ENCODE measurements at regions of chr10 and their contacts with region 1.

Region 1: GRCh38 chr10:9294865-9295264 is 1240.4 kb downstream of the GATA3 start:
- DNase-seq: no peak
- ATAC-seq: no peak
- H3K4me3 ChIP-seq: no peak overlapping the region
- H3K27ac ChIP-seq: no peak overlapping the region
- H3K4me1 ChIP-seq: no peaks in the 10 kb centered on the region
- H3K27me3 ChIP-seq: no peaks in the 10 kb centered on the region
- CTCF ChIP-seq: no peak
- EP300 ChIP-seq: no peak
- POLR2A ChIP-seq: no peak
- RAD21 ChIP-seq: no peak

Region 2: GRCh38 chr10:8035006-8035640 is 1259.7 kb before region 1 on chr10:
- CTCF ChIA-PET with region 1: no interaction called
- POLR2A ChIA-PET with region 1: no interaction called
- in situ Hi-C with region 1: no loop called
- intact Hi-C with region 1: loop called (anchors 5 kb)
- DNase-seq: no peak
- ATAC-seq: no peak
- H3K4me3 ChIP-seq: no peak overlapping the region
- H3K27ac ChIP-seq: no peak overlapping the region
- H3K4me1 ChIP-seq: peaks cover 0 to 15% of the 10 kb centered on the region in 2 experiments; a peak in 1 of 5 replicates
- H3K27me3 ChIP-seq: peaks cover 31 to 55% of the 10 kb centered on the region in 2 experiments
- CTCF ChIP-seq: no peak
- EP300 ChIP-seq: no peak
- POLR2A ChIP-seq: no peak
- RAD21 ChIP-seq: no peak

Region 3: DNA sequence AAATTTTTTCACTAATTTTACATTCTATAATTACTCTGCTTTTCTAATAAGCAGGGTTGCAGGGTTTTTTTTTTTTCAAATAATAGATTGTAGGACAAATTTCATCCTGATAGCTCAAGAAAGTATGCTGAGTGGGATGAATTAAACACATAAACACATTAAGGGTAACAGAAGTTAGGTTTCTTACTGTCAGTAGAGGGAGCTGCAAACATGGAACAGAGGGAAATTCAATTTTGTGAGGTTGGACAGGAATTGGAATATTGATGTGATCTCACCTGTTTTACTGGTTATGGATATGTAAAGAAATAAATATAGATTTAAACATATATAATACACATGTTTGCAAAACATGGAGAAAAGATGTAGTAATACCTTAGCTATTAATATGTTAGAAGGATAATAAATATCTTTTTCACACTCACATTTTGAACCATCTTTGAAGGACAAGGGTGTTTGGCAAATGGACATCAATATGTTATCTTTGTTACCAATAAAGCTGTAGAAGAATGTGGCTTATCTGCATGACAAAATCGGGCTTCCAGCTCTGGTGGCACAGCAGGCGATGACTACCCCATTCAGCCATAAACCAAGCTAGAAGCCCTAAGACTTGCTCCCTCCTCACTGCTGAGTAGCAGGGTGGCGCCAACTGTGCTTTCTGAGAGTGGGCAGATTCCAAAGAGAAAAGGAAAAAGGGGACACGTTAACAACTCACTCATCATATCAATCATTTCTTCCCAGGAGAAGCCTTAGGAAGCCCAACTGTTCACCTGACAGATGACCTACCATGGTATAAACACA is 17.0 kb after region 1 on chr10:
- CTCF ChIA-PET with region 1: no interaction called
- POLR2A ChIA-PET with region 1: no interaction called
- in situ Hi-C with region 1: no loop called
- intact Hi-C with region 1: no loop called
- DNase-seq: no peak
- ATAC-seq: no peak
- H3K4me3 ChIP-seq: no peak overlapping the region
- H3K27ac ChIP-seq: no peak overlapping the region
- H3K4me1 ChIP-seq: no peaks in the 10 kb centered on the region
- H3K27me3 ChIP-seq: no peaks in the 10 kb centered on the region
- CTCF ChIP-seq: no peak; a peak in 1 of 6 replicates
- EP300 ChIP-seq: no peak
- POLR2A ChIP-seq: no peak
- RAD21 ChIP-seq: peak in 1 of 2 experiments; percentile 26; a peak in 2 of 4 replicates

Measured in K562 (cell line).